ENCODE measurements at regions of chr12 and their contacts with region 1.

Region 1: GRCh38 chr12:53746592-53747092 is 5.1 kb downstream of the CISTR start:
- DNase-seq: no peak
- H3K4me3 ChIP-seq: no peak overlapping the region
- CTCF ChIP-seq: peak; percentile 100

Region 2: DNA sequence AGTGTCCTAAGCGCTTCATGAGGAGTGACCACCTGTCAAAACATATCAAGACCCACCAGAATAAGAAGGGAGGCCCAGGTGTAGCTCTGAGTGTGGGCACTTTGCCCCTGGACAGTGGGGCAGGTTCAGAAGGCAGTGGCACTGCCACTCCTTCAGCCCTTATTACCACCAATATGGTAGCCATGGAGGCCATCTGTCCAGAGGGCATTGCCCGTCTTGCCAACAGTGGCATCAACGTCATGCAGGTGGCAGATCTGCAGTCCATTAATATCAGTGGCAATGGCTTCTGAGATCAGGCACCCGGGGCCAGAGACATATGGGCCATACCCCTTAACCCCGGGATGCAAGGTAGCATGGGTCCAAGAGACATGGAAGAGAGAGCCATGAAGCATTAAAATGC is 335.7 kb before region 1 on chr12:
- CTCF ChIA-PET with region 1: no interaction called
- POLR2A ChIA-PET with region 1: no interaction called
- DNase-seq: no peak
- H3K4me3 ChIP-seq: no peak overlapping the region
- CTCF ChIP-seq: no peak

Region 3: DNA sequence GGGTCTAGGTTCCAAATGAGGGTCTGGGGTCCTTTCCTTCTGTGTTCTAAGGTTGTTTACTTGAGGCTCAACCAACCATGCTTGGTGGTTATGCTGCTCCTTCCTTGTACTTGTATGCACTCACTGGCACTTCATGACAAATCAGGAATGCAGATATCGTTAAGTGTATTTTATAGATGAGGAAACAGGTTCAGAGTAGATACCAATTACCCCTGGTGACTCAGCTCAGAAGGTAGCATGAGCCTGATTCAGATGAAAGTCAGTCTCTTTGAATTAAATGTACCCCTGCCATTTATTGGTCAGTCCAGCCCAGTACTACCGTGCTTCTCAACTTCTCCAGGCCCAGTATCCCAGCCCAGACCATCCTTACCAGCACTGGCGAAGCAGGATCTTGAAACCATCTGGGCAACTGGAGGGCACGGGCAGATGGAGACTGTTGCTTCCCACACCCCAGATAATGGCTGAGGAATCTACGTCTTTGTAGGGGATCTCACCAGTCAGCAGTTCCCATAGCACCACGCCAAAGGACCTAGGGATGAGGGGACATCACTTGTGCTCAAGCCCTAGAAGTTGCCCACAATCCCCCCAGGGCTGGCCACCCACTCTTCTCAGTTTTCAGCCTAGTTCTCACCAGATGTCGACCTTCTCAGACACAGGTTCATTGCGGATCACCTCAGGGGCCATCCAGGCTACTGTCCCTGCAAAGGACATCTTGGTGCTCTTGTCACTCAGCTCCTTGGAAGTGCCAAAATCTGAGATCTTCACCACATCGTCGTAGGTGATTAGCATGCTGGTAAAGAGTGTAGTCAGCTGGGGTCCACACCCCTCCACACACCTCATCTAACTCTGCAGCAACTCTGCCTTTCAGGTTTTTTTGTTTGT is 261.7 kb before region 1 on chr12:
- CTCF ChIA-PET with region 1: no interaction called
- POLR2A ChIA-PET with region 1: no interaction called
- DNase-seq: no peak
- H3K4me3 ChIP-seq: no peak overlapping the region
- CTCF ChIP-seq: no peak

Region 4: GRCh38 chr12:53543539-53543938 is 203.1 kb before region 1 on chr12:
- CTCF ChIA-PET with region 1: interaction called, 103 read pairs
- POLR2A ChIA-PET with region 1: no interaction called
- DNase-seq: no peak
- H3K4me3 ChIP-seq: no peak overlapping the region
- CTCF ChIP-seq: peak; percentile 95

Region 5: DNA sequence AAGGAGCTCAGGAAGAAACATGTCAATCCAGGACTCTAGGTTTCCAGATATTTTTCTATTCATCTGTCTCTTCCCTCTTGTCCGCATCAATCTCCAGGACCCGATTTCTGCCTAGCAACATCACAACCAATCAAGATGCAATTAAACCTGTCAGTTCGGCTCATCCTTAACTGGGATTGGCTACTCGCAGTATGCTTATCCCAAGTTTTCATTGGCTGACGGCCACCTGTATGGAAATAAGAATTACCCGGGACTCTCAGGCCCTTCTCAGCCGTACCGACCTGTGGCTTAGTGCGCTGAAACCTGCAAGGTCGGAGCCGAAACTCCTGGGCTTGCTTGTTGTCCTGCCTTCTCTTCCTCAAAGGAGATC is 50.4 kb before region 1 on chr12:
- CTCF ChIA-PET with region 1: interaction called, 635 read pairs
- POLR2A ChIA-PET with region 1: interaction called, 3 read pairs
- DNase-seq: no peak
- H3K4me3 ChIP-seq: no peak overlapping the region
- CTCF ChIP-seq: no peak

Region 6: GRCh38 chr12:53719649-53720048 is 27.0 kb before region 1 on chr12:
- CTCF ChIA-PET with region 1: interaction called, 668 read pairs
- POLR2A ChIA-PET with region 1: no interaction called
- DNase-seq: no peak
- H3K4me3 ChIP-seq: no peak overlapping the region
- CTCF ChIP-seq: no peak

Region 7: DNA sequence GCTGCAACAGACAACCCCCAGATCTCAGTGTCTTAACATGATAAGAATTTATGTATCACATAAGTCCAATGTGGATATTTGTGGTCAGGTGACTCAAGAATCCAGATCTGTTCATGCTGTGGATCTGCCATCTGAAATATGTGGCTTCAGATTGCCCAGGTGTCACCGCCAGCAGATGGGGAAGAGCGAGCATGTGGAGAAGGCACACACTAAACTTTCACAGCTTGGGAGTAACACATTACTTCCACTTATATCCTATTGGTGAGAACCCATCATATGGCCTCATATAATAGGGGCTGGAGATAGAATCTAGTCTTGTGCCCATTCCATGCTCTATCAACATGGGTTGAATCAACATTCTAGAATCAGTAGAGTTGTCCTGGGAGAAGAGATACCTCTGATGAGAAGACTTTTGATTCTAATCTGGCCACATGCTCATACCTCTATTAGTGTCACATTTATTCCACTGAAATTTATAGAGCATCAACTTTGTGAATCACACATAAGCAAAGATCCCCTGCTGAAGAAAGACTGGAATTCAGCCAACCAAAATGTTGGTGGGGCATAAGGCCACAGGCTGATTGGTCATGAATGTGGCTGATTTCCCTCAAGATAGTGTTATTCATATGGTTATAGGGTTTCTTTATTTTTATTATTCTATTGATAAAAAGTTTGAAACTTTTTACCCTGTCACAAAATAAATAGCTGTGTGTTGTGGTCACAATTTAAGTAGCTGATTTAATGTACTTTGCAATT is 13.4 kb before region 1 on chr12:
- CTCF ChIA-PET with region 1: interaction called, 668 read pairs
- POLR2A ChIA-PET with region 1: no interaction called
- DNase-seq: no peak
- H3K4me3 ChIP-seq: no peak overlapping the region
- CTCF ChIP-seq: no peak

Region 8: GRCh38 chr12:53770281-53770680 is 23.6 kb after region 1 on chr12:
- CTCF ChIA-PET with region 1: interaction called, 41 read pairs
- POLR2A ChIA-PET with region 1: no interaction called
- DNase-seq: peak; percentile 90
- H3K4me3 ChIP-seq: no peak overlapping the region
- CTCF ChIP-seq: no peak

Region 9: DNA sequence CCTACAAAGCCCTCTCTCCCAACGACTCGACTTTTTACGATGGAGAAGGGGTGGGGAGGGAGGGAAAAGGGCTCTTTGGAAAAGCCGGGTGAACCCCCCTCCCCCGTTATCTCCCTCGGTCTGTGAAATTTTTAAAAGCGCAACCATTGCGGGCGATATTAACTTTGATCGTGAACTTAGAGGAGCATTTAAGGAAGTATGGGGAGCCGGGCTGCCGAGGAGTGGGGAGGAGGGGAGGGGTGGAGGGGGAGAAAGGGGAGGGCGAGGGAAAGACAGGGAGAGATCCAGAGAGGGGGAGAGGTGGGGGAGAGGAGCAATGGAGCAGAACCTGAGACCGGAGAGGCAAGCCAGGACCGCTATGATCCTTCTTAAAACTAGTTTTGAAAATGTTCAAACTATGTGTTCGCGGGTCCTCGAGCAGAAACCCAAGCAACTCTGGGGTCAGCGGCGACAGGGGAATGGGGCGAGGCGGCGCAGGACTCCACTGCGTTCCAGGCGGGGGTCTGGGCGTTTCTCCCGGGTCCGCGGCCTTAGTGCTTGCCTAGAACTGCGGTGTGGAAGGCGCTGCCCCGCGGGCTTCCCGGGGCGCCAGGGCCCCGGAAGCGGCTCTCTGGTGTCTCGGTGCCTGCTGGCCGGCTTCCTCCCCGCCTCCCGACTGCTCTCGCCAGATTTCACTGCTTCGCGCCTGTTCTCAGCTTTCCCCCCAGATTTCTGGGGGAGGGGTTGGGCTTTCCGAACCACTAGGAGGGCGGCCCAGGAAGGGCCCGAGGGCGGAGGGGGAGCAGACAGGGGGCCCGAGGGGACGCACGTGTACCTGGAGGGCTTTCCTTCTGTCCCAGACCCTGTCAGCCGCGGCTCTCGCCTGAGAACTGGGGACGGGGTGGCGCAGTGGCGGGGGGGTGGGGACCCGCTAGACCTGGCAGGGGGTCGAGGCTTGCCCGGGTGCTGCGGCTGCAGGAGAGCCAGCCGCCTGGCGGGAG is 227.7 kb after region 1 on chr12 and contains the start of gene HOTAIR:
- CTCF ChIA-PET with region 1: interaction called, 11 read pairs
- POLR2A ChIA-PET with region 1: interaction called, 3 read pairs
- DNase-seq: no peak
- H3K4me3 ChIP-seq: peak within 1 kb of the TSS; percentile 76
- CTCF ChIP-seq: no peak